CD8-positive, alpha-beta memory T cell (primary cell): ENCODE measurements at regions of chr2 and their contacts with region 1.

Region 1: DNA sequence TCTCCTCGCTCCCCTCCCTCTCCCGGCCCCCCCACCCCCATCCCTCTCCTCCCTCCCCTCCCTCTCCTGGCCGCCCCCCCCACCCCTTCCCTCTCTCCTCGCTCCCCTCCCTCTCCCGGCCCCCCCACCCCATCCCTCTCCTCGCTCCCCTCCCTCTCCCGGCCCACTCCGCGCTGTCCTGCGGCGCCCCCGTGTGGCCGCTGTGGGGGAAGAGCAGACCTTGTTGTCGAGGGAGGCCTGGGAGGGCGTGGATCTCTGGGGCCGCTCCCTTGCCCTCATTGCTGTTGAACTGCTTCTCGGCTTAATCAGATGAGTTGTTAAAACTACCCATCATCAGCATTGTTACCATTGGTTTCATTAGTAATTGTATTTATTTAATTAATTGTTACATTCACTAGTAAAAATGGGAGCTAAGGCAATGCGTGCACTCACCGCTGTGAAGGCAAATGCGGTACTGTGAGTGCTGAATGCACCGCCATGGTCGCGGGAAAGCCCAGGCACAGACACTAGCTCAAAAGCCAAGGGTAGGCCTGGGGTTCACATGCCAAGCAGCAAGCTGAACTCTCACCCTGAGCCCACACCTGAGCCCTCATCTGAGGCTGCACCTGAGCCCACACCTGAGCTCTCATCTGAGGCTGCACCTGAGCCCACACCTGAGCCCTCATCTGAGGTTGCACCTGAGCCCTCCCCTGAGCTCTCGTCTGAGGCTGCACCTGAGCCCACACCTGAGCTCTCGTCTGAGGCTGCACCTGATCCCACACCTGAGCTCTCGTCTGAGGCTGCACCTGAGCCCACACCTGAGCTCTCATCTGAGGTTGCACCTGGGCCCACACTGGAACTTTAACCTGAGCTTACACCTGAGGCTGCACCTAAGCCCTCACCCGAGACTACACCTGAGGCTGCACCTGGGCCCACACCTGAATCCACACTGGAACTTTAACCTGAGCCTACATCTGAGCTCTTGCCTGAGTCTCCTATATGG is 8.8 kb downstream of the RTP5 start:
- DNase-seq: peak; percentile 67 to 83 (median 71)
- H3K4me3 ChIP-seq: no peak overlapping the region
- H3K4me3 Mint-ChIP-seq: no peak overlapping the region
- H3K27ac ChIP-seq: no peak overlapping the region
- H3K27ac Mint-ChIP-seq: peak overlapping the region in 2 of 8 donors; percentile 63 to 93
- H3K4me1 ChIP-seq: peaks cover 25% of the 10 kb centered on the region
- H3K4me1 Mint-ChIP-seq: peaks cover 27 to 49% (median 28%) of the 10 kb centered on the region in 3 donors
- H3K27me3 ChIP-seq: no peaks in the 10 kb centered on the region
- H3K27me3 Mint-ChIP-seq: peaks cover 0 to 6% of the 10 kb centered on the region in 2 donors

Region 2: DNA sequence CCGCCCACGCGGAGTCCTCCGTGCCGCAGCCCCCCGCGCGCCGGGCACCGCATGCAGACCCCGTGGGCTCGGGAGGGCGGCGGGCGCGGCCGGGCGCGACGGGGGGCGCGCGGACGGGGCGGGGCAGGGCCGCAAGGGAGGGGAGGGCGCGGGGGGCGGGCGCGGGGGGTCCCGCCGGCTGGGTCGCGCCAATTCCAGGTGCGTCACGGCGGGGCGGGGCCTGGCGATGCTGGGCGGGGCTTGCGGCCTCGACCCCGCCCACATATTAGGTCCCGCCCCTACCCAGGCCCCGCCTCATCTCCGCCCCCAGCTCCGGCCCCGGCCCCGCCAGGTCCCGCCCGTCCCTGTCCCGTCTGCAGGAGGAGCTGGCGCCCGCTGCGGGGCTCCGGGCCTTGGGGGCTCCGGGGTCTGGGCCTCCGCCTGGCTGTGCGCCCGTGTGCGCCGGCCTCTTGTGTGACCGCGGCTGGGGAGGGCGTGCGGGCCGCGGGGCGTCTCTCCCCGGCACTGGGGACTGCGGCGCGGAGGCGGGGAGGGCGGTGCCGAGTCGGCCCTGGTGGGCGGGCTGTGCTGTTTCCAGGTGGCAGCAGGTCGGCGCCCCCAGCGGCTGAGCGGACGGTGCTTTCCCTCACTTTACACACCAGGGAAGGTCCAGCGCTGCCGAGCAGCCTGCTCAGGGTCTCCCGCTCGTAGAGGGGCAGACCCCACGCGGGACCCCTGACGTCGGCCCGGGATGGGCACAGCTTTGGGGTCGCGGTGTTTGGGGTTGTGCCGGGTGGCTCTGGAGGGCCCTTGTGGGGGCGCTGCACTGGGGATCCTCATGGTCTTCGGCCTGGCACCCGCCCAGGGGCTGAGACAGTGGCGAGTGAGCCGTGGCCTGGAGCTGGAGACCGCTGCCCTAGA is 175.9 kb before region 1 on chr2:
- CTCF ChIA-PET with region 1: interaction called, 10 read pairs
- POLR2A ChIA-PET with region 1: interaction called, 5 read pairs
- DNase-seq: peak; percentile 85 to 94 (median 91)
- H3K4me3 ChIP-seq: peak overlapping the region; percentile 68
- H3K4me3 Mint-ChIP-seq: peak overlapping the region; percentile 78 to 88 (median 84)
- H3K27ac ChIP-seq: peak overlapping the region; percentile 65
- H3K27ac Mint-ChIP-seq: peak overlapping the region; percentile 56 to 97 (median 86)
- H3K4me1 ChIP-seq: peaks cover 7% of the 10 kb centered on the region
- H3K4me1 Mint-ChIP-seq: peaks cover 14 to 26% (median 20%) of the 10 kb centered on the region in 3 donors
- H3K27me3 ChIP-seq: no peaks in the 10 kb centered on the region
- H3K27me3 Mint-ChIP-seq: no peaks in the 10 kb centered on the region

Region 3: GRCh38 chr2:241724259-241724974 is 153.9 kb before region 1 on chr2:
- CTCF ChIA-PET with region 1: interaction called, 18 read pairs
- POLR2A ChIA-PET with region 1: no interaction called
- DNase-seq: peak; percentile 17 to 64 (median 25)
- H3K4me3 ChIP-seq: no peak overlapping the region
- H3K4me3 Mint-ChIP-seq: no peak overlapping the region
- H3K27ac ChIP-seq: no peak overlapping the region
- H3K27ac Mint-ChIP-seq: no peak overlapping the region
- H3K4me1 ChIP-seq: no peaks in the 10 kb centered on the region
- H3K4me1 Mint-ChIP-seq: no peaks in the 10 kb centered on the region
- H3K27me3 ChIP-seq: no peaks in the 10 kb centered on the region
- H3K27me3 Mint-ChIP-seq: no peaks in the 10 kb centered on the region

Region 4: DNA sequence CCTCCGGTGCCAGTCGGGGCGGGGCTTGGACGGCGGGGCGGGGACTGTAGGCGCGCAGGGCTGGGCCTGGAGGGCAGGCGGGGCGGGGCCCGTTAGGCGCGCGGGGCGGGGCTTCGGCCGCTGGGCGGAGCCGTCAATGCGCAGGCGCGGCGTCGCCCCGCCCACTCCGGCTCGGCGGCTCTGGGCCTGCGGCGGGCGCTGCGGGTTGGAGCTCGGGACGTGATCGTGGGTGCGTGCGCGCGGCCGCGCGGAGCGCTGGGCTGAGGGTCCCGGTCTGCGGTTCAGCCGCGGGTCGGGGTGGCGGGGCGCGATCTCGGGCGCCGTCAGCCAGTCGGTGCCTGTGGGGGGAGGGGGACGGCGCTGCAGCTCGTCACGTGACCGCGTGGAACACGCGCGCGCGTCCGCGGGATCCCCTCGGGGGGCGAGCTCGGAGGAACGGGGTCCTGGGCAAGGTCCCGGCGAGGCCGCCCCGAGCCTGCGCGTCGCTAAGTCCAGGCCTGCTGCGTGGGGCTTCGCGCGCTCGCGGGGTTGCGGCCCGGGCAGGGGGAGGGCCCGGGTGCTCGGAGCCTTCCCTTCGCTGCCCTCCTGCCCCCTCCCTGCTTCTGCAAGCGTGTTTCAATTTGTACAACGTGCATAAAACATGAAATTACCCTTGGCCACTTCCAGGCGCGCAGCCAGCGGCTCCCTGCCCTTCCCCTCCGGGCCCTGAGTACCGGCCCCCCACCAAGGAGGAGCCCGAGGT is 143.6 kb before region 1 on chr2 and contains the start of gene D2HGDH:
- CTCF ChIA-PET with region 1: interaction called, 13 read pairs
- POLR2A ChIA-PET with region 1: interaction called, 3 read pairs
- DNase-seq: peak; percentile 90 to 95 (median 93)
- H3K4me3 ChIP-seq: peak within 1 kb of the TSS; percentile 69
- H3K4me3 Mint-ChIP-seq: peak within 1 kb of the TSS; percentile 80 to 92 (median 85)
- H3K27ac ChIP-seq: peak within 1 kb of the TSS; percentile 74
- H3K27ac Mint-ChIP-seq: peak within 1 kb of the TSS; percentile 56 to 95 (median 78)
- H3K4me1 ChIP-seq: peaks cover 12% of the 10 kb centered on the region
- H3K4me1 Mint-ChIP-seq: peaks cover 29 to 62% (median 33%) of the 10 kb centered on the region in 3 donors
- H3K27me3 ChIP-seq: no peaks in the 10 kb centered on the region
- H3K27me3 Mint-ChIP-seq: no peaks in the 10 kb centered on the region
- total RNA-seq, gene D2HGDH: 22.9 to 23.4 TPM

Region 5: GRCh38 chr2:241748468-241749256 is 129.6 kb before region 1 on chr2:
- CTCF ChIA-PET with region 1: no interaction called
- POLR2A ChIA-PET with region 1: no interaction called
- DNase-seq: no peak
- H3K4me3 ChIP-seq: no peak overlapping the region
- H3K4me3 Mint-ChIP-seq: no peak overlapping the region
- H3K27ac ChIP-seq: no peak overlapping the region
- H3K27ac Mint-ChIP-seq: peak overlapping the region in 1 of 8 donors; percentile 84
- H3K4me1 ChIP-seq: no peaks in the 10 kb centered on the region
- H3K4me1 Mint-ChIP-seq: peaks cover 4 to 6% (median 4%) of the 10 kb centered on the region in 3 donors
- H3K27me3 ChIP-seq: no peaks in the 10 kb centered on the region
- H3K27me3 Mint-ChIP-seq: no peaks in the 10 kb centered on the region

Region 6: DNA sequence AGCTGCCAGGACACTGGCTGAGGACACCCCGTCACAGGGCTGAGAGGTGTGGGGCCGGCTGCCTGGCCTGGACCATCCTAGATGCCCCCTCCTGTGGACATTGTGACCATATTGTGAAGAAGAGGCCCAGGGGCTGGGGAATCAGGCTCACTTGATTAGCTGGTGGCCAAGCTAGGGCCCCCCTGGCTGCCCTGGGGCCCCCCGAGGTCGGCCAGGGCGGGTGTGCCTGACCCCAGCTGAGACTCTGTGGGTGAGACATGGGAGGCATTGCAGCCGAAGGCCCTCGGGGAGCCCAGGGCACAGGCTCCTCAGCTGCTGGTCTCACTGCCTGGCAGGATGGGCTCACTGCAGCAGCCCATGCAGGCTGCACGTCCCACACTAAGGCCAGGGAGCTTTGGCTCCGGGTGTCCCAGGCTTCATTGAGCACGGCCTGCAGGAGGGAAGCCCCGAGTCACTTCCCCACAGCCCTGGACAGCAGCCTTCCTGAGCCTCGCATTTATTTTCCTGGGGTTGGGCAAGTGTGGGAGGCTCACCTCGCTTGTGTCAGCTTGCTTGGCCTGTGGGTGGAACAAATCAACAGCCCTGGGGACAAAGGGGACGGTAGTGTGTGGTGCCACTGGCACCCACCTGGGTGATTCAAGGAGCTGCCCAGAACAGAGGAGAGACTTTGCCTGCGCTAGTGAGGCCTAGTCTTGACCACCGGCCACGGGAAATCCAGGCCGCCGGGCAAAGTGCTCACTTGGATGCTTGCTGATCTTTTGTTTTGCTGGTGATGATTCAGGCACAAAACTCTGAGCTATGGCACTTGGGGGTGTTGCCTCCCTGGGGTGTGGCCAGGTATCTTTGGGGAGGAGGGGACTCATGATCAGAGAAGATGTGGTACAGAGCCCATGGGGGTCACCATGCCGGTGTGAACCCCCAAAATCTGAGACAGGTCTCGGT is 100.3 kb before region 1 on chr2:
- CTCF ChIA-PET with region 1: no interaction called
- POLR2A ChIA-PET with region 1: no interaction called
- DNase-seq: no peak
- H3K4me3 ChIP-seq: no peak overlapping the region
- H3K4me3 Mint-ChIP-seq: no peak overlapping the region
- H3K27ac ChIP-seq: no peak overlapping the region
- H3K27ac Mint-ChIP-seq: peak overlapping the region in 1 of 8 donors; percentile 36
- H3K4me1 ChIP-seq: no peaks in the 10 kb centered on the region
- H3K4me1 Mint-ChIP-seq: peaks cover 0 to 1% (median 0%) of the 10 kb centered on the region in 3 donors
- H3K27me3 ChIP-seq: no peaks in the 10 kb centered on the region
- H3K27me3 Mint-ChIP-seq: no peaks in the 10 kb centered on the region